ENCODE measurements at regions of chr14 and their contacts with region 1.

Region 1: DNA sequence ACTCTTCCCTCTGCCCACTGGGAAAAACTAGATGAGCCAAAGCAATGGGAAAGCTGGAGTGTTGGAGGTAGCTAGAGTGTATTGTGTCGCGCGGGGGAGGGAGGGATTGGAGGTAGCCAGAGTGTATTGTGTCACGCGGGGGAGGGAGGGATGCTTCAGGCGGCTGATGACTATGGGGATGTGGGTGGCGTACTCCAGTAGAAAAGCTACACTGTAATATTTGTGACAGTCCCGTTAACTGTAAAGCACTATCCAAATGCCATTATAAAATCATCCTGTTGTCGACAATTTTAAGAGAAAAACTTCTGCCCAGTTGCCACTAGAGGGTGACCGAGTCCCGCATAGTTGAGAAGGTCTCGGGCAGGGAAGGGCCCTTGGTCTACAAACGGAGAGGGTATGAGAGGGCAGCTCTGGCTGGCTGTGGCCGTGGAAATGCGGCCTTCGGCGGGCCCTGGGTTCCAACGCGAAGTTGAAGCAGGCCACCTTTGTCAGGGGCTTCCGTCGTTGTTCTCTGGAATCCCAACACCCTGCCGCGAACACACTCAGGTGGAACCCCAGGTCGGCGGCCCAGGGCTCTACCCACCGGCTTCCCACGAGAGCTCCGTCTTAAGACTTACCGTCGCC is 15.1 kb upstream of the PLEK2 start:
- DNase-seq: peak; percentile 66 to 82 (median 74)
- ATAC-seq: peak; percentile 89
- H3K4me3 ChIP-seq: no peak overlapping the region
- H3K4me1 ChIP-seq: peaks cover 10% of the 10 kb centered on the region
- CTCF ChIP-seq: peak; percentile 49

Region 2: DNA sequence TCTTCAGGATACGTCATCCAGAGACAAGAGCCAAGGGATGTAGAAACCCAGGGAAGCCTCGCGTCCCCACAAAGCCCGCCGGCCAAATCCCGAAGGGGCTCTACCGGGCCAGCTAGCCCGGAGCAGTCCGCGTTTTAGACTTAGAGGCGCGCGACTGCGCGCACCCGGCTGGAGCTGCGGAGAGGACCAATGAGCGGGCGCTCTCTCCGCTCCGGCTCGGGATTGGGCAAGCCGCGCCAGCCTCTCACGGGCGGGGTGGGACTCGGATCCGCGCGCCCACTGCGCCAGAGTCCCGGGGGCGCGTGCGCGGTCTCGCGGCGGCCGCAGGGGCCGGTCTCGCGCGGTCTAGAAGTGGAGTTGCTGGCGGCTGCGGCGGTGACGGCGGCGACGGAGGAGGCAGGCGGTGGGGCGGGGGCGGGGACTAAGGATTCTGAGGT is 186.1 kb before region 1 on chr14:
- intact Hi-C with region 1: no loop called
- DNase-seq: peak; percentile 95 to 98 (median 97)
- ATAC-seq: peak; percentile 94
- H3K4me3 ChIP-seq: peak overlapping the region; percentile 96
- H3K4me1 ChIP-seq: peaks cover 16% of the 10 kb centered on the region
- CTCF ChIP-seq: no peak

Region 3: DNA sequence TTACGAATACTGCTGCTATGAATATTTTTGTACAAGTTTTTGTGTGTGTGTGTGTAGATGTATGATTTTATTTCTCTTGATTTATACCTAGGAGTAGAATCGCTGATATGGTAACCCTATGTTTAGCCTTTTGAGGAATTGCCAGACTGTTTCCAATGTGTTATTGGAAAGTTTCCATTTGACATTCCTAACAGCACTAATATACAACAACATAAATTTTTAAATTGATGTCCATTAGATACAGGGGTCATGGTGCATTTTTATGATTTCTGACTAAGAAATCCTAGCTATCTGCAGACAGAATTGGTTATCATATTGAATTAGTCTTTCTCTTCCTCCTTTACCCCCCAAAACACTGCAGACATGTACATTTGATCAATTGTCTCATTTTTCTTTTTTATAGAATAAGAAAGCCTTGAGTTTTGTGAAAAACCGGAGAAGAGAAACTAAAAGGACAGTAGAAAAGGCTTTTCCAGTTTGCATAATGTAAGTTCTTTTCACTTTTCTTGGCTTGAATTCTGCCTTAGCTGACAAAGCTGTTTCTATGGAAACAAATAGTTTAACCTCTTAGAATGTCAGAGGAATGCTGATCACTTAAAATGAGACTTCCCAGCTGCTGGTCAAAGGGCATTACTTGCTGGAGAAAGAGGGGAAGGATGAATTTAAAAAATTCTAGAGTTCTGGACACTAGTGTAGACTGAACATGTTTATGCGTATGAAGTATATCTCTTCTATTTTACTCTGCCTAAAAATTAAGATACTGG is 157.6 kb before region 1 on chr14:
- intact Hi-C with region 1: no loop called
- DNase-seq: no peak
- ATAC-seq: no peak
- H3K4me3 ChIP-seq: no peak overlapping the region
- H3K4me1 ChIP-seq: no peaks in the 10 kb centered on the region
- CTCF ChIP-seq: no peak

Region 4: GRCh38 chr14:67571272-67571850 is 144.3 kb after region 1 on chr14:
- intact Hi-C with region 1: loop called in 1 of 2 experiments (anchors 5 kb)
- DNase-seq: peak in 2 of 3 donors; percentile 76 to 83
- ATAC-seq: peak; percentile 77
- H3K4me3 ChIP-seq: no peak overlapping the region
- H3K4me1 ChIP-seq: no peaks in the 10 kb centered on the region
- CTCF ChIP-seq: peak; percentile 53

Measured in mucosa of descending colon (tissue), 3 donors.